Activated T-helper 1 cell treated with anti-CD3 and anti-CD28 coated beads, Interleukin-12 subunit alpha, Interleukin-12 subunit beta, Interleukin-2, Interleukin-4 antibody, amounts not matched to agents 30 ng/mL and 10 ng/mL and 1 ng/mL, durations not matched to agents 14 hours and 24 hours and 36 hours (primary cell): ENCODE measurements at regions of chr4 and their contacts with region 1.

Region 1: DNA sequence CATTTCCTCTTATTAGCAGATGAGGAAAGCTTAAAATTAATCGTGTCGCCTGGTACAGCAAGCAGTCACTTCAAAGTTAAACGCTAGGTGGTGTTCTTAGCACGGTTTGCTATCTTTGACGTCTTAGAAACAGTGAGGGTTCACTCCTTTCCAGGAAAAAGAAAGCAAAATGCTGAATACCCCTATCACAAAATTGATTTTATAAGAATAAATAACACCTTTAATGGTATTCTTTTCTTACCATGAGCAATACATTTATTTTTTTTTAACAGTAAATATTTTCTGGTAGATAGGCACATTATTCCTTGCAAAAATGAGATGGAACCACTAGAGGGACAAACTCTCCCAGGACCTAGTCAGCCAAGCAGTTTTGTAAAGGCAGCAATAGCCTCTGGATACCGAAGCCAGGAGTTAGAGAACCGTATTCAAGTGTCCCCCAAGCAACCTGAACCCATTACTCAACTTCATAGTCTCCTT is 153.9 kb downstream of the KDR start:
- DNase-seq: no peak
- H3K4me3 Mint-ChIP-seq: no peak overlapping the region
- H3K27ac Mint-ChIP-seq: no peak overlapping the region
- H3K4me1 Mint-ChIP-seq: no peaks in the 10 kb centered on the region
- H3K27me3 Mint-ChIP-seq: no peaks in the 10 kb centered on the region

Region 2: GRCh38 chr4:54914781-54915180 is 56.7 kb before region 1 on chr4:
- intact Hi-C with region 1: no loop called
- DNase-seq: no peak
- H3K4me3 Mint-ChIP-seq: no peak overlapping the region
- H3K27ac Mint-ChIP-seq: no peak overlapping the region
- H3K4me1 Mint-ChIP-seq: no peaks in the 10 kb centered on the region
- H3K27me3 Mint-ChIP-seq: no peaks in the 10 kb centered on the region

Region 3: DNA sequence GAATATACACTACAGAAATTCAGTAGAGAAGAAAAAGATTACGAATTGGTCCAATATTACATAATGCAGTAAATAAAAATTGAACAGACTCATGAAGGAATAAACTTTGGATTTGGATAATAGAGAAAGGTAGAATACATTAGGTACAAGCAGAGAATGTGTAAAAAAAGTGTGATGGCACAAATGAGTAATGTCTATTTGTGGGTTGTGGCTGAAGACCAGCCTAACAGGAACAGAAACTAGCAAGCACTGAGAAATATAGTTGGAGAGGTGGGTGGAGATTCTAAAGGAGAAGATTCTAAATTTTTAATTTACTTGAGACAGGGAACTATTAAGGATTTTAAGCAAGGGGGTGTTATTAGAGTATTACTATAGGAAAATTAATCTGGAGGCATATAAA is 590.4 kb after region 1 on chr4:
- intact Hi-C with region 1: loop called (anchors 10 kb)
- DNase-seq: no peak
- H3K4me3 Mint-ChIP-seq: no peak overlapping the region
- H3K27ac Mint-ChIP-seq: peak overlapping the region; percentile 53
- H3K4me1 Mint-ChIP-seq: peaks cover 7% of the 10 kb centered on the region
- H3K27me3 Mint-ChIP-seq: peaks cover 7% of the 10 kb centered on the region

Region 4: DNA sequence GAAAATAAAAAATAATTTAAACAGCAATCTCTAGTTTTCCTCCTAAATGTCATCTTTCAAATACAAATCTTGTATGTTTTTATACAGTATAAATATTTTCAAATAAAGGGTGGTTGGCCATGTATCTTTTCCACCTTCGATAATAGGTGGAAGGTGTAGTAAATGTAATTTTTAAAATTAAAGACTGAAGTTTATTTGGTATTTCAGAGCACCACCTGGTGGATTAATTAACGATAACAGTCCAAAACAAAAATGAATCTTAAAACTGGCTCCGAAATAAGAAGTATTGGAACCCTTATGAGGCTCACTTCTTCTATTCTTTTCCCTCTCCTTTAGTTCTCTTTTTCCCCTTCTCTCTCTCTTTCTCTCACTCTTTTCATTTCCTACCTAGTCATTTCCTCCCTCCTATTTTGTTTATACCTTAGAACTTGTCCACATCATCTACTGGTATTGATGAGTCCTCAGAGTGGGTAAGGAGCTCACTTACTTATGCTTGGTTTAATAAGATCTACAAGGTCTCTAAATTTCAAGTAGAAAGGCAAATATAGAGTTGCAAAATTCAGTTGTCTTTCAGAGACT is 765.2 kb after region 1 on chr4:
- intact Hi-C with region 1: loop called (anchors 5 kb)
- DNase-seq: no peak
- H3K4me3 Mint-ChIP-seq: no peak overlapping the region
- H3K27ac Mint-ChIP-seq: no peak overlapping the region
- H3K4me1 Mint-ChIP-seq: no peaks in the 10 kb centered on the region
- H3K27me3 Mint-ChIP-seq: peaks cover 16% of the 10 kb centered on the region